ENCODE measurements at regions of chr14 and their contacts with region 1.

Region 1: DNA sequence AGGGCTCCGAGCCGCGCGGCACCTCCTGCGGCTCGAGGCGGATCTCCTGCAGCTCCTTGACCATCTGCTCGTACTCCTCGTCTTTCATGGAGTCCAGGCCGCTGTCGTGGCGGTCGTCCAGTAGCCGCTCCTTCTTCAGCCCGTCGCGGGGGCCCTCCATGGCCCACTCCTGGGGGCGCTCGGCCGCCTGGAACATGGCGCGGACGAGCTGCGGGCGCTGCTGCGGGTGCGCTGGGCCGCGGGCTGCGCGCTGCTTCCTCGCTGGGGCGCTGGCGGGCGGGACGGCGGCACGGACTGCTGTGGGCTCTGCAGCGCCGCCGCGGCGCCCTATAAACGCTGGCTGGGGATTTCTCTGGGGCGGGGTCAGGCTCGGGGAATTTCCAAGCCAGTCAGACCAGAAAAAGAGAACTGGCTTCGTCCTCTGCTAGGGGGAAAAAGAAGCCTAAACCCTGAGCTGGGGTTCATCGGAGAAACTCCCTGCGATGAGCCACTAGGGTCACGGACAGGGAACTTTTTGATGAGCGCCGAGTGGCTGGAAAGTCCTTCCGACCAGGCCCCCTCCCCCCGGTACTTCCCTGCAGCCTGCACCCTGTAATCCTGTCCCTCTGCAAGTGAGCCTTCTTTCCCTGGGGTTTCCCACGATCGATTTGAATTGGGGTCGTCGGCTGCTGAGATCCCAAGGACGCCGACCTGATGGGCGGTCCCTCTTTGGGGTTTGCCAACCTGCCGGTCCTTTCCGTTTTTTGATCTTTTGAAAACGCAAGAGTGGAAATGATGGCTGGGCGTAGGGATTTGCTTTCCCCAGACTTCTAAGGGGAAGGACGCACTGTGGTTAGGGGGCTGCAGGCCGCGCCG is at the start of gene NFKBIA:
- DNase-seq: peak; percentile 94
- ATAC-seq: peak; percentile 72
- H3K4me3 Mint-ChIP-seq: peak within 1 kb of the TSS; percentile 92
- H3K27ac Mint-ChIP-seq: peak within 1 kb of the TSS; percentile 96
- H3K4me1 Mint-ChIP-seq: peaks cover 47% of the 10 kb centered on the region
- H3K27me3 Mint-ChIP-seq: no peaks in the 10 kb centered on the region
- total RNA-seq, gene NFKBIA: 85.5 to 88.1 TPM

Region 2: GRCh38 chr14:35229495-35230089 is 175.1 kb before region 1 on chr14:
- POLR2A ChIA-PET with region 1: interaction called, 33 read pairs
- DNase-seq: no peak
- ATAC-seq: peak; percentile 67
- H3K4me3 Mint-ChIP-seq: no peak overlapping the region
- H3K27ac Mint-ChIP-seq: peak overlapping the region; percentile 24
- H3K4me1 Mint-ChIP-seq: peaks cover 23% of the 10 kb centered on the region
- H3K27me3 Mint-ChIP-seq: no peaks in the 10 kb centered on the region

Region 3: GRCh38 chr14:35292051-35292769 is 112.5 kb before region 1 on chr14 and contains the start of gene PSMA6:
- POLR2A ChIA-PET with region 1: interaction called, 127 read pairs
- DNase-seq: peak; percentile 98
- ATAC-seq: peak; percentile 93
- H3K4me3 Mint-ChIP-seq: peak within 1 kb of the TSS; percentile 93
- H3K27ac Mint-ChIP-seq: peak within 1 kb of the TSS; percentile 89
- H3K4me1 Mint-ChIP-seq: peaks cover 30% of the 10 kb centered on the region
- H3K27me3 Mint-ChIP-seq: no peaks in the 10 kb centered on the region
- total RNA-seq, gene PSMA6: 213 to 221 TPM

Region 4: DNA sequence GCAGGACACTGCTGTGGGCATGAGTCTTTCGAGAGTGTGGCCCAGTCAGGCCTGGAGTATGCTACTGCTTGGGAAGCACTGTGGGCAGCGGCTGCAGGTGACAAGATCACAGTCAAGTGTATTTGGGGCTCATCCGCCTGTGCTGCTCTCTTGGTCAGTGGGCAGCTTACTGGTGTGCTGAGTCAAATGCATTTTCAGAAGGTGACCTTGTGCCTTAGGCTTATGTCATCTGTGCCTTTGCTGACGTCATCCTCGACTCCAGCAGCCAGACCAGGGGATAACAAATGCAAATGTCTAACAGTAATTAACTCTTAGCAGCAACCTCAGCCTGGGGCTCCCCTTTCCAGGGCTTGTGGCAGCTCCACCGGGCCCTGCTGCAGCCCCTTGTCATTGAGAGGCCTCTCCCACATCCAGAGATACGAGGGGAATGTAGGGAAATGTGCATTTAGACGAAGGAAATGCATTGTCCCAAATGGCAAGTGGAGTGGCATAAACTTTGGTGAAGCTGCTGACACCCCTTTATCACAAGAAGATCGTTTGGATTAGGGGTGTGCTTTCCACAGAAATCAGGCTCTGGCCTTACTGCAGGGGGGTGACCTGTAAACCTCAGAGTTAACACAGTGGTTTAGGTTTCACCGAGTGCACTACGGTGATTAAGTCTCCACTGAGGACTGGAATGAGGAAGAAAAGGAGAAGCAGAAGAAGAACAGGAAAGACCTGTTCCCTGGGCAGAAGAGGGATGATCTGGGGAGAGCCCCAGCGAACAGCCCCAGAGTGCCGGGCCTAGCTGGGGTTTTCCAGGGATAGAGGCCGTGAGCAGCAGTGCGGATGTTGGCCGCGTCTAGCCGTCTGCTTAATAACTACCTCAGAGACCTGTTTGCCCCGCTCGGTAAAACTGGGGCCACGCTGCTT is 72.8 kb before region 1 on chr14:
- POLR2A ChIA-PET with region 1: interaction called, 71 read pairs
- DNase-seq: no peak
- ATAC-seq: no peak
- H3K4me3 Mint-ChIP-seq: no peak overlapping the region
- H3K27ac Mint-ChIP-seq: peak overlapping the region; percentile 87
- H3K4me1 Mint-ChIP-seq: peaks cover 29% of the 10 kb centered on the region
- H3K27me3 Mint-ChIP-seq: no peaks in the 10 kb centered on the region

Region 5: GRCh38 chr14:35365130-35366055 is 39.3 kb before region 1 on chr14:
- POLR2A ChIA-PET with region 1: interaction called, 43 read pairs
- DNase-seq: peak; percentile 51
- ATAC-seq: peak; percentile 58
- H3K4me3 Mint-ChIP-seq: peak overlapping the region; percentile 7
- H3K27ac Mint-ChIP-seq: peak overlapping the region; percentile 71
- H3K4me1 Mint-ChIP-seq: peaks cover 39% of the 10 kb centered on the region
- H3K27me3 Mint-ChIP-seq: no peaks in the 10 kb centered on the region

Measured in activated naive CD8-positive, alpha-beta T cell treated with anti-CD3 and anti-CD28 coated beads, Interleukin-2, amount 10 ng/mL, durations not matched to agents 7 days and 5 days (primary cell).